CD8-positive, alpha-beta T cell (primary cell): ENCODE measurements at regions of chr10 and their contacts with region 1.

Region 1: GRCh38 chr10:88091490-88092105 is 228.2 kb downstream of the PTEN start:
- DNase-seq: peak; percentile 46 to 91 (median 67)
- ATAC-seq: peak; percentile 93
- H3K4me3 ChIP-seq: no peak overlapping the region
- H3K4me3 Mint-ChIP-seq: peak overlapping the region; percentile 33
- H3K27ac ChIP-seq: peak overlapping the region; percentile 26 to 76
- H3K27ac Mint-ChIP-seq: peak overlapping the region; percentile 92
- H3K4me1 ChIP-seq: peaks cover 38% of the 10 kb centered on the region
- H3K4me1 Mint-ChIP-seq: peaks cover 43% of the 10 kb centered on the region
- H3K27me3 ChIP-seq: no peaks in the 10 kb centered on the region
- H3K27me3 Mint-ChIP-seq: no peaks in the 10 kb centered on the region
- CTCF ChIP-seq: no peak

Region 2: GRCh38 chr10:87961046-87961713 is 130.4 kb before region 1 on chr10:
- CTCF ChIA-PET with region 1: no interaction called
- POLR2A ChIA-PET with region 1: no interaction called
- intact Hi-C with region 1: loop called in 1 of 2 experiments (anchors 10 kb)
- DNase-seq: no peak
- ATAC-seq: no peak
- H3K4me3 ChIP-seq: no peak overlapping the region
- H3K4me3 Mint-ChIP-seq: no peak overlapping the region
- H3K27ac ChIP-seq: no peak overlapping the region
- H3K27ac Mint-ChIP-seq: peak overlapping the region; percentile 83
- H3K4me1 ChIP-seq: no peaks in the 10 kb centered on the region
- H3K4me1 Mint-ChIP-seq: peaks cover 10% of the 10 kb centered on the region
- H3K27me3 ChIP-seq: no peaks in the 10 kb centered on the region
- H3K27me3 Mint-ChIP-seq: no peaks in the 10 kb centered on the region
- CTCF ChIP-seq: no peak

Region 3: DNA sequence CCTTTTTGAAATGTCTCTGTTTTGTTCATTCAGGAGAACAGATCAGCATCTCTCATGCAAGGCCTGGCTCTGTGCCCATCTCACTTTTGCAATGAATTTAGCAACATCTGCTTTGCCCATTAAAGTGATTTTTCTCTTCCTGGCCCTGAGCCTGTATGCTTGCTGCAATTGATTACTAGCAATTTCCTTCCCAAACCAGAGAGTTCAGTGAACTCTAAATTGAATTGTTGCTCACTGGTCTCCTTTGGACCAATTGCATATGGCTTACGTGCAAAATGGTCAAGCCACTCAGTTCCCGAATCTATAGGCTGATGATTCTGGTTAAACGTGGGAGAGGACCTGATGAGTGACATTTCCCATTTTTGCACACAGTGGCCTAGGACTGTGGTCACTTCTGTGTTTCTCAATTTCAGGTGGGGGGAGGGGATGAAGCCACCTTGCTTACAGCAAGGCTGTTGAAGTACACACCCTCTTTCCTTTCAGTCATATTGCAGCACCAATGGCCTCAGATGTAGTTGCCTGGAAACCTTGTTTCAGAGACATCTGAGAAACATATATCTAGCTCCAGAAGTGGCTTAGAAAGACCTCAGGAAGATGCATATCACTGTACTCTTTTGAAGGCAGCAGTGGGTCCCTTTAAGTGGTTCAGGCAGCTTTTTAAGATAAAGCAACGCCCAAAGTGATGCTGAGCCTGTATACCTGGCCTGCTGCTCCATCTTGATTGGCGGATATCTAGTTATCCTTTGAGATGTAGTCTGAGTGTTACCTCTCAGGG is 26.8 kb before region 1 on chr10:
- CTCF ChIA-PET with region 1: interaction called, 14 read pairs
- POLR2A ChIA-PET with region 1: no interaction called
- intact Hi-C with region 1: no loop called
- DNase-seq: peak in 4 of 9 experiments; percentile 29 to 81 (median 59)
- ATAC-seq: peak; percentile 88
- H3K4me3 ChIP-seq: no peak overlapping the region
- H3K4me3 Mint-ChIP-seq: no peak overlapping the region
- H3K27ac ChIP-seq: peak overlapping the region in 1 of 2 experiments; percentile 55
- H3K27ac Mint-ChIP-seq: peak overlapping the region; percentile 82
- H3K4me1 ChIP-seq: peaks cover 89% of the 10 kb centered on the region
- H3K4me1 Mint-ChIP-seq: peaks cover 79% of the 10 kb centered on the region
- H3K27me3 ChIP-seq: no peaks in the 10 kb centered on the region
- H3K27me3 Mint-ChIP-seq: no peaks in the 10 kb centered on the region
- CTCF ChIP-seq: no peak

Region 4: DNA sequence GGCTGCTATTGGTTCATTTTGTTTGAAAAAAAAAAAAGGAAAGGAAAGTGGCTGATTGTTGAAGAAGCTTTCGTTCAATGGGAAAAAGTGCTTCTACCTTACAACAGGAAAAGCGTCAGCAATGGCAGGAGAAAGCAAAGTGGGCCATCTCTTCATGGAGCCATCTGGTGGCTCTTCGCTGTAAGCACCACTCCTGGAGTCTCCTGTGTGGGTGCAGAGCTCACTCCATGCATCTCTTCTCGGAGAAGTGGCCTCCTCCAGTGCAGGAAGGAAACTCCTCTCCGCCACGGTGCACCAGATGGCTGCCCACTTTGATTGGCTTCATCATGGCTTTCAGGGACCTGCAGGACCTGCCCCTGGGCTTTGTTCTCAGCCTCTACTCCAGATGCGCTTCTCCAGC is 22.8 kb after region 1 on chr10:
- CTCF ChIA-PET with region 1: interaction called, 17 read pairs
- POLR2A ChIA-PET with region 1: interaction called, 3 read pairs
- intact Hi-C with region 1: no loop called
- DNase-seq: peak in 3 of 9 experiments; percentile 17 to 64 (median 52)
- ATAC-seq: peak; percentile 47
- H3K4me3 ChIP-seq: no peak overlapping the region
- H3K4me3 Mint-ChIP-seq: no peak overlapping the region
- H3K27ac ChIP-seq: no peak overlapping the region
- H3K27ac Mint-ChIP-seq: no peak overlapping the region
- H3K4me1 ChIP-seq: peaks cover 23% of the 10 kb centered on the region
- H3K4me1 Mint-ChIP-seq: peaks cover 16% of the 10 kb centered on the region
- H3K27me3 ChIP-seq: no peaks in the 10 kb centered on the region
- H3K27me3 Mint-ChIP-seq: no peaks in the 10 kb centered on the region
- CTCF ChIP-seq: no peak

Region 5: DNA sequence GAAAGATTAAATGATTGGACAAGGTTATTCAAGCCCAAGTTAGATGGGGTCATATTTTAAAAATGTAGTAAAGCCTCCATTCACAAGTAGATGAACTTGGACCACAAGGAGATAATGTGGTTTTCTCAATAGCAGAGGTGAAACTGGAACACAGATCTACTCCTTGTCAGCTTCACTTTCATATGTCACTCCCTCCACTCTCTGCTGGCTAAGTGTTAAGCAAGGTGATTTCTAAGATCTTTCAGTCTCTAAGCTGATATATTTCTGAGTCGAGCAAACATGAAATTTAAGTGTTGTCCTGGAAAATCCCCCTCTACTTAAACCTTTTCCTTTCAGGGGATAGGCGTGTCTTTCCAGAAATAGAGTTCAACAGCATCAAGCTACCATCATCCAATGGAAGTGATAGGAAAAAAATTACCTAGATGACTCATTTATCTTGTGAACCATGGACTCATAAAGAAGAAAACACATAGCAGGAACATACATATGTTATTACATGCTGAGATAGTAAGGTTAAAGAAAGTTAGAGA is 46.8 kb after region 1 on chr10:
- CTCF ChIA-PET with region 1: no interaction called
- POLR2A ChIA-PET with region 1: no interaction called
- intact Hi-C with region 1: loop called in 1 of 2 experiments (anchors 5 kb)
- DNase-seq: no peak
- ATAC-seq: no peak
- H3K4me3 ChIP-seq: no peak overlapping the region
- H3K4me3 Mint-ChIP-seq: no peak overlapping the region
- H3K27ac ChIP-seq: no peak overlapping the region
- H3K27ac Mint-ChIP-seq: no peak overlapping the region
- H3K4me1 ChIP-seq: no peaks in the 10 kb centered on the region
- H3K4me1 Mint-ChIP-seq: peaks cover 3% of the 10 kb centered on the region
- H3K27me3 ChIP-seq: no peaks in the 10 kb centered on the region
- H3K27me3 Mint-ChIP-seq: no peaks in the 10 kb centered on the region
- CTCF ChIP-seq: no peak

Region 6: DNA sequence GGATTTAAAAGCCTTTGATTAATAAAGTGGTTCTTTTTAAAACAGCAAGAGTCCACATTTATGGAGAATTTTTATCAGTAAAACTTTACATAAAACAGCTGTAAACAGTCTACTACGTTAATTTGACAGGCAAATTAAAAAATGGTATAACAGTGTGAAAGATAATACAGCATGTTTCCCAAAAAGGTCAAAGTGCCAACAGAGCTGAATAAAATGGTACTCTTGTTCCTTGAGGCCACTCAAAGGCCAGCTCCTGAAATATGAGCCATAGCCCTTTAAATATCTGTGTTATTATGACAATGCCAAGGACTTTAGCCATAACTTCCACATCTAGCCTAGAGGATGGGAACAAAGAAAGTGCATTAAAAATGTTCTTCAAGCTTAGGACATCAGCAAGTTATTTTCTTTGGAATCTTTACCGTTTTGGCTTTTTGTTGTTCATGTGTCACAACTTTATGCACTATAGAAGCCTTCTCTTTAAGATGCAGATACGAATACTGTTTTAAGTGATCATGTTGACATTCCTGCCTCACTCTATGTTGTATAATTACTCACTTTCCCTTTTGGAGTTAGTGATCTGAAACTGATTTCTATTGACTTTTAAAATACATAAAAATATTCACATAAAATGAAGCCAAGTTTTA is 325.9 kb after region 1 on chr10:
- CTCF ChIA-PET with region 1: no interaction called
- POLR2A ChIA-PET with region 1: no interaction called
- intact Hi-C with region 1: no loop called
- DNase-seq: no peak
- ATAC-seq: no peak
- H3K4me3 ChIP-seq: no peak overlapping the region
- H3K4me3 Mint-ChIP-seq: no peak overlapping the region
- H3K27ac ChIP-seq: no peak overlapping the region
- H3K27ac Mint-ChIP-seq: no peak overlapping the region
- H3K4me1 ChIP-seq: no peaks in the 10 kb centered on the region
- H3K4me1 Mint-ChIP-seq: no peaks in the 10 kb centered on the region
- H3K27me3 ChIP-seq: no peaks in the 10 kb centered on the region
- H3K27me3 Mint-ChIP-seq: no peaks in the 10 kb centered on the region
- CTCF ChIP-seq: no peak

Region 7: GRCh38 chr10:88428442-88428841 is 336.8 kb after region 1 on chr10:
- CTCF ChIA-PET with region 1: no interaction called
- POLR2A ChIA-PET with region 1: no interaction called
- intact Hi-C with region 1: no loop called
- DNase-seq: no peak
- ATAC-seq: no peak
- H3K4me3 ChIP-seq: no peak overlapping the region
- H3K4me3 Mint-ChIP-seq: no peak overlapping the region
- H3K27ac ChIP-seq: no peak overlapping the region
- H3K27ac Mint-ChIP-seq: no peak overlapping the region
- H3K4me1 ChIP-seq: no peaks in the 10 kb centered on the region
- H3K4me1 Mint-ChIP-seq: peaks cover 3% of the 10 kb centered on the region
- H3K27me3 ChIP-seq: no peaks in the 10 kb centered on the region
- H3K27me3 Mint-ChIP-seq: no peaks in the 10 kb centered on the region
- CTCF ChIP-seq: no peak